ENCODE measurements at regions of chr2 and their contacts with region 1.

Region 1: DNA sequence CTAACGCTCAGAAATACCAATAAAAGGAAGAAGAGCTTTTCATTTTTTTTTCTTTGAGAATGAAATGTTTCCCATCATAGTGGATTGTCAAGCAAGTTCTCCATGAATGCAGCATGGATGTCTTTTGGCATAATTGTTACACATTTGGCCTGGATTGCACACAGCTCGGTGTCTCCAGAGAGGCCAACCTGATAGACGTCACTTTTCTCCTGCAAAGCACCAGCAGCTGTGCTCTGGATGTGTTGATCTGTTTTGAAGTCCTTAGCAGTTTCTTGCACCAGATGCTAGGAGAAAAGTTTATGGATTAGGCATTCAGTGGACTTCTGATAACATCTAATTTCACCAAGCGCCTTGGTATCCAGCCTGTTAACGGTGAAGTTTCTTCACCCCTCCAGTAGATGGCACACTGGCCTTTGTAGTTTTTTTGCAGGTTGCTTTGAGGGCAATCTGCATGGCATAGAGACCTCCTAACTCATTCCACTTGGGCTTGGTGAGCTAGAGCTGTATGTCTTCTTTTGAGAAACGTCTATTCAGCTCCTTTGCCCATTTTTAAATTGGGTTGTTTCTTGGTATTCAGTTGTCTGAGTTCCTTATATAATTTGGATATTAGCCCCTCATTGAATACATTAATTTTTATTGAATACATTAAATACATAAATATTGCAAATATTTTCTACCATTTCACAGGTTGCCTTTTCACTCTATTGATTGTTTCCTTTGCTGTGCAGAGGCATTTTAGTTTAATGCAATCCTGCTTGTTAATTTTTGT is 59.7 kb downstream of the PTH2R start:
- DNase-seq: peak; percentile 54 to 70
- H3K4me3 ChIP-seq: no peak overlapping the region
- H3K4me3 Mint-ChIP-seq: no peak overlapping the region
- H3K27ac Mint-ChIP-seq: no peak overlapping the region
- H3K4me1 ChIP-seq: peaks cover 27% of the 10 kb centered on the region
- H3K4me1 Mint-ChIP-seq: peaks cover 30% of the 10 kb centered on the region
- H3K27me3 ChIP-seq: no peaks in the 10 kb centered on the region
- H3K27me3 Mint-ChIP-seq: no peaks in the 10 kb centered on the region
- CTCF ChIP-seq: peak; percentile 71 to 88

Region 2: GRCh38 chr2:208399202-208399601 is 67.1 kb before region 1 on chr2:
- CTCF ChIA-PET with region 1: no interaction called
- POLR2A ChIA-PET with region 1: no interaction called
- intact Hi-C with region 1: loop called (anchors 5 kb)
- DNase-seq: no peak
- H3K4me3 ChIP-seq: no peak overlapping the region
- H3K4me3 Mint-ChIP-seq: no peak overlapping the region
- H3K27ac Mint-ChIP-seq: no peak overlapping the region
- H3K4me1 ChIP-seq: no peaks in the 10 kb centered on the region; the same call in 1 of the 2 replicates
- H3K4me1 Mint-ChIP-seq: peaks cover 8% of the 10 kb centered on the region
- H3K27me3 ChIP-seq: no peaks in the 10 kb centered on the region; the same call in 1 of the 2 replicates
- H3K27me3 Mint-ChIP-seq: peaks cover 7% of the 10 kb centered on the region
- CTCF ChIP-seq: no peak

Region 3: GRCh38 chr2:208545403-208546042 is 79.2 kb after region 1 on chr2:
- CTCF ChIA-PET with region 1: no interaction called
- POLR2A ChIA-PET with region 1: no interaction called
- intact Hi-C with region 1: loop called (anchors 5 kb)
- DNase-seq: peak; percentile 39 to 50
- H3K4me3 ChIP-seq: no peak overlapping the region
- H3K4me3 Mint-ChIP-seq: no peak overlapping the region
- H3K27ac Mint-ChIP-seq: no peak overlapping the region
- H3K4me1 ChIP-seq: peaks cover 25% of the 10 kb centered on the region
- H3K4me1 Mint-ChIP-seq: peaks cover 16% of the 10 kb centered on the region
- H3K27me3 ChIP-seq: no peaks in the 10 kb centered on the region
- H3K27me3 Mint-ChIP-seq: no peaks in the 10 kb centered on the region
- CTCF ChIP-seq: no peak

Region 4: DNA sequence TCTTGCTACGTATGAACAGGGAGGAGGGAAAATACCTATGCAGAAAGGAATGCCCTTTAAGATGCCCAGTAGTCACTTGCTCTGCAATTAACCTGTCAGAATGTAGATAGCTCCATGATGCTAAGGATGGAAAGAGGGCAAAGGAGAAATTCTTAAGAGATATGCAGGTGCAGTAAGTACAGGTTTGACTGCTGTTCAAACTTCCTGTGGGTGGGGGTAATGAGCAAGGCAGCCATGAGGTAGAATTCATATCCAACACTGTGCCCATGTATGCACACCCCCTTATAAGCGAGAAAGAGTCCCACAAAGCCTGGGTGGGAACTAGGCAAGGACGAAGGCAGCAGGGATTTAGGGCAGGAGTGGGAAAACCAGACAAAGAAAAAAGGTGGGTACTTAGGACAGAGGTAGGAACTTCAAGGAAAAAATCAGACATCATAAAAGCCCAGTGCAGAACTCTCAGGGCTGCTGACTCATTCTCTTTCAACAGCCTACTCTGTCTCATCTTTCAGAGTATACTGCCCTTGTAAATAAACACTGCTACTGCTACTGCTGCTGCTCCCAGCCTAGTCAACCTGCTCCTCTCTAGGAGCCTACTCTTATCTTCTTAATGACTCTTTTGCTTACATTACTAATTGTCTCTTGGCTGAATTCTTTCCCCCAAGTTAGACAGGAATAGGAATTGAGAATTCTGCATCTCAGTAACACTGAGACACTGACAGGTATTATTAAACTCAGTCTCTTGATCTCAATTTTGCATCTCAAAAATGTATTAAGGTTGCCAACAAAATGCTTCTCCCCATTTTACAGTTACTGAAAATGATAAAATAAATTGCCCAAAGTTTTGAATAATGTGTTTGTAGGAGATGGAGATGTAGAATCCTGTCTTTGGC is 129.3 kb after region 1 on chr2:
- CTCF ChIA-PET with region 1: interaction called, 7 read pairs
- POLR2A ChIA-PET with region 1: no interaction called
- intact Hi-C with region 1: loop called (anchors 2 kb)
- DNase-seq: peak; percentile 72 to 77
- H3K4me3 ChIP-seq: no peak overlapping the region
- H3K4me3 Mint-ChIP-seq: peak overlapping the region; percentile 65
- H3K27ac Mint-ChIP-seq: peak overlapping the region; percentile 92
- H3K4me1 ChIP-seq: peaks cover 22% of the 10 kb centered on the region
- H3K4me1 Mint-ChIP-seq: peaks cover 18% of the 10 kb centered on the region
- H3K27me3 ChIP-seq: no peaks in the 10 kb centered on the region
- H3K27me3 Mint-ChIP-seq: no peaks in the 10 kb centered on the region
- CTCF ChIP-seq: peak; percentile 32 to 51

Region 5: DNA sequence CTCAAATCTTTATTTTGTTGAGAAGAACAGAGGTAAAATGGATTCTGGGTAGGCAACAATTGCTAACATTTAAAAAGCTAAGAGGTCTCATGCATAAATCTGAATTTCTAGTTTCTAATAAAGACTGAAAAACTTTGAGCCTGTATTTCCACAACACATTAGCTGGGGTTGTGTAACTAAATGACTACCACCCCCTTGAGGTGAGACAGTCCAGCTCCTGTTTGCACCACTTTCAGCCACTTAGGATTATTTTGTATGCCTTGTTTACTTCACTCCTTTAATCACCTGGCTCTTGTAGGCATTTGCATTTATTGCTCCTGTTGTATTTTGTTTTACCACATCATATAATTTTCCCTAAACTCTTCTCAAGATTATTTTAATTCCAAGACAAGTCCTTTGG is 316.9 kb after region 1 on chr2:
- CTCF ChIA-PET with region 1: interaction called, 4 read pairs
- POLR2A ChIA-PET with region 1: no interaction called
- intact Hi-C with region 1: loop called (anchors 1 kb)
- DNase-seq: peak in 1 of 2 experiments; percentile 6
- H3K4me3 ChIP-seq: no peak overlapping the region
- H3K4me3 Mint-ChIP-seq: no peak overlapping the region
- H3K27ac Mint-ChIP-seq: no peak overlapping the region
- H3K4me1 ChIP-seq: no peaks in the 10 kb centered on the region
- H3K4me1 Mint-ChIP-seq: no peaks in the 10 kb centered on the region
- H3K27me3 ChIP-seq: no peaks in the 10 kb centered on the region
- H3K27me3 Mint-ChIP-seq: no peaks in the 10 kb centered on the region
- CTCF ChIP-seq: peak; percentile 35 to 41

Region 6: DNA sequence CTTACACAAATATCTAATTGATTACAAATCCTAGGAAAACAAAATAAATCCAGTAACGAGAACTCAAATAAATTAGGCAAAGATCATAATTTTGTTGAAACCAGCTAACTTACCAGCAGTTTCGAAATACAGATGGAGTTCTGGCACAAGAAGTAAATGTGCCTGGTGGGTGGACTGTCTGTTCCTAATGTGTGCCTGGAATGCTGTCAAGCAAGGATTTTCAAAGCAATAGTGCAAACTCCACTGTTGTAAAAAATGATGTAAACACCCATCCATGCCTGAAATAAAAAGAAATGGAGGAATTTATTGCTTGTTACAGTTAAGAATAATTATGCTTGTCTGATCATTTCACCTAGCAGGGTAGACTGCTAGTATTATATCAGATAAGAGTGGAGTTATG is 533.6 kb after region 1 on chr2:
- CTCF ChIA-PET with region 1: no interaction called
- POLR2A ChIA-PET with region 1: no interaction called
- intact Hi-C with region 1: loop called (anchors 2 kb)
- DNase-seq: peak; percentile 65 to 75
- H3K4me3 ChIP-seq: no peak overlapping the region
- H3K4me3 Mint-ChIP-seq: peak overlapping the region; percentile 53
- H3K27ac Mint-ChIP-seq: peak overlapping the region; percentile 75
- H3K4me1 ChIP-seq: peaks cover 22% of the 10 kb centered on the region
- H3K4me1 Mint-ChIP-seq: peaks cover 17% of the 10 kb centered on the region
- H3K27me3 ChIP-seq: no peaks in the 10 kb centered on the region
- H3K27me3 Mint-ChIP-seq: no peaks in the 10 kb centered on the region
- CTCF ChIP-seq: no peak

Region 7: GRCh38 chr2:209334198-209335017 is 868.1 kb after region 1 on chr2:
- CTCF ChIA-PET with region 1: interaction called, 3 read pairs
- POLR2A ChIA-PET with region 1: no interaction called
- intact Hi-C with region 1: loop called (anchors 5 kb)
- DNase-seq: peak; percentile 39 to 61
- H3K4me3 ChIP-seq: no peak overlapping the region
- H3K4me3 Mint-ChIP-seq: no peak overlapping the region
- H3K27ac Mint-ChIP-seq: no peak overlapping the region
- H3K4me1 ChIP-seq: no peaks in the 10 kb centered on the region
- H3K4me1 Mint-ChIP-seq: no peaks in the 10 kb centered on the region
- H3K27me3 ChIP-seq: no peaks in the 10 kb centered on the region
- H3K27me3 Mint-ChIP-seq: no peaks in the 10 kb centered on the region
- CTCF ChIP-seq: peak; percentile 79 to 84